B cell (primary cell): ENCODE measurements at regions of chr12 and their contacts with region 1.

Region 1: GRCh38 chr12:130013771-130014484 is 110.1 kb upstream of the TMEM132D start:
- DNase-seq: peak; percentile 27
- ATAC-seq: no peak
- H3K4me3 ChIP-seq: no peak overlapping the region
- H3K4me3 Mint-ChIP-seq: no peak overlapping the region
- H3K27ac ChIP-seq: no peak overlapping the region
- H3K27ac Mint-ChIP-seq: no peak overlapping the region
- H3K4me1 ChIP-seq: no peaks in the 10 kb centered on the region
- H3K4me1 Mint-ChIP-seq: no peaks in the 10 kb centered on the region
- H3K27me3 ChIP-seq: no peaks in the 10 kb centered on the region
- H3K27me3 Mint-ChIP-seq: peaks cover 10% of the 10 kb centered on the region
- CTCF ChIP-seq: peak; percentile 50

Region 2: GRCh38 chr12:130026608-130027176 is 12.8 kb after region 1 on chr12:
- CTCF ChIA-PET with region 1: interaction called, 10 read pairs
- POLR2A ChIA-PET with region 1: no interaction called
- intact Hi-C with region 1: no loop called
- DNase-seq: no peak
- ATAC-seq: no peak
- H3K4me3 ChIP-seq: no peak overlapping the region
- H3K4me3 Mint-ChIP-seq: no peak overlapping the region
- H3K27ac ChIP-seq: no peak overlapping the region
- H3K27ac Mint-ChIP-seq: no peak overlapping the region
- H3K4me1 ChIP-seq: no peaks in the 10 kb centered on the region
- H3K4me1 Mint-ChIP-seq: no peaks in the 10 kb centered on the region
- H3K27me3 ChIP-seq: no peaks in the 10 kb centered on the region
- H3K27me3 Mint-ChIP-seq: no peaks in the 10 kb centered on the region
- CTCF ChIP-seq: peak; percentile 42